B cell (primary cell): ENCODE measurements at regions of chr6 and their contacts with region 1.

Region 1: GRCh38 chr6:109009236-109009961 is 85.2 kb downstream of the SESN1 start:
- DNase-seq: peak; percentile 94
- ATAC-seq: peak; percentile 98
- H3K4me3 ChIP-seq: peak overlapping the region; percentile 77 to 97 (median 89)
- H3K4me3 Mint-ChIP-seq: peak overlapping the region; percentile 98
- H3K27ac ChIP-seq: peak overlapping the region; percentile 87 to 90
- H3K27ac Mint-ChIP-seq: peak overlapping the region; percentile 97
- H3K4me1 ChIP-seq: peaks cover 32 to 52% of the 10 kb centered on the region in 2 donors
- H3K4me1 Mint-ChIP-seq: peaks cover 64% of the 10 kb centered on the region
- H3K27me3 ChIP-seq: no peaks in the 10 kb centered on the region
- H3K27me3 Mint-ChIP-seq: no peaks in the 10 kb centered on the region
- CTCF ChIP-seq: no peak

Region 2: GRCh38 chr6:108983151-108983550 is 26.2 kb before region 1 on chr6:
- CTCF ChIA-PET with region 1: no interaction called
- POLR2A ChIA-PET with region 1: no interaction called
- intact Hi-C with region 1: no loop called
- DNase-seq: no peak
- ATAC-seq: no peak
- H3K4me3 ChIP-seq: no peak overlapping the region
- H3K4me3 Mint-ChIP-seq: no peak overlapping the region
- H3K27ac ChIP-seq: no peak overlapping the region
- H3K27ac Mint-ChIP-seq: no peak overlapping the region
- H3K4me1 ChIP-seq: no peaks in the 10 kb centered on the region
- H3K4me1 Mint-ChIP-seq: no peaks in the 10 kb centered on the region
- H3K27me3 ChIP-seq: no peaks in the 10 kb centered on the region
- H3K27me3 Mint-ChIP-seq: no peaks in the 10 kb centered on the region
- CTCF ChIP-seq: no peak

Region 3: DNA sequence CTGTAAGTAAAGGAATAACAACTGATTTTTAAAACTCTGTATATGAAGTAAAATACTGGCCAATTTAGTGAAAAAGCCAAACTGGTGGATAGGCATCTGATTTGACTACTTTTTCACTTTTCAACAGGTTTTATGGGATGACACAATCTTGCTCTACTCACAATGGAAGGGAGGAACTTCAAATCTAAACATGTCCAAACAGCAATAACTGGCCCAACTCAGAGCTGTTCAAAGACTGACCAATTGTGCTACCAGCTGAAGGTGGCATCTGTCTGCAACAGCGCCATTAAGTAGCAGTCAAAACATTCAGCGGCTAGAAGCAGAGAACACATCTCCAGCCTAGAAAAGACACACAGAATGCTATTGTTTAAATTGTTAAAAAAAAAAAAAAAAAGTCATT is 40.6 kb after region 1 on chr6:
- CTCF ChIA-PET with region 1: no interaction called
- POLR2A ChIA-PET with region 1: interaction called, 3 read pairs
- intact Hi-C with region 1: loop called (anchors 5 kb)
- DNase-seq: no peak
- ATAC-seq: no peak
- H3K4me3 ChIP-seq: no peak overlapping the region
- H3K4me3 Mint-ChIP-seq: no peak overlapping the region
- H3K27ac ChIP-seq: no peak overlapping the region
- H3K27ac Mint-ChIP-seq: no peak overlapping the region
- H3K4me1 ChIP-seq: peaks cover 24 to 32% of the 10 kb centered on the region in 2 donors
- H3K4me1 Mint-ChIP-seq: peaks cover 31% of the 10 kb centered on the region
- H3K27me3 ChIP-seq: no peaks in the 10 kb centered on the region
- H3K27me3 Mint-ChIP-seq: no peaks in the 10 kb centered on the region
- CTCF ChIP-seq: no peak

Region 4: DNA sequence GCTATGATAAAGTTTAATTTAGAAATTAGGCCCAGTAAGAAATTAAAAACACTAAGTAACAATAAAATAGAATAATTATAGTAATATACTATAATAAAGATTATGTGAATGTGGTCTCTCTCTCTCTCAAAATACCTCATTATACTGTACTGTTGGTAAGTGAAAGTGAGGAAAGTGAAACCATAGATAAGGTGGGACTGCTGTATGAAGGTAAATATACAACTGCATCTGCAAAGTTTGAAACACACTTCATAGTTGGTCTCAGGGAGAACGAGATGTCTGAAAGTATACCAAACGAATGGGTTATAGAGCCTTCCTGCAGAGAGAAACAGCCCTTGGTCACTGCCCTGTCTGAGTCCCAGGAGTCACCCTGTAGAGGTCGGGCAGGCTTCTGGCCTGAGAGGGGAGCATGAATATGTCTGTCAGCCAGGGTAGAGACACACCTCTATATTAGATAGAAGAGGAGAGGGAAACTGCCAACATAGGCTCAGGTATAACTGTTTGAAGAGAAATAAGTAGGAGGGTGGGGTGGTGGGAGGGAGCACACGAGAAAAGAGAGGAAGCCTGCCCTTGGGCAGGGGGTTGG is 53.5 kb after region 1 on chr6:
- CTCF ChIA-PET with region 1: no interaction called
- POLR2A ChIA-PET with region 1: no interaction called
- intact Hi-C with region 1: no loop called
- DNase-seq: no peak
- ATAC-seq: no peak
- H3K4me3 ChIP-seq: no peak overlapping the region
- H3K4me3 Mint-ChIP-seq: no peak overlapping the region
- H3K27ac ChIP-seq: no peak overlapping the region
- H3K27ac Mint-ChIP-seq: no peak overlapping the region
- H3K4me1 ChIP-seq: peaks cover 7 to 8% of the 10 kb centered on the region in 2 donors
- H3K4me1 Mint-ChIP-seq: peaks cover 19% of the 10 kb centered on the region
- H3K27me3 ChIP-seq: no peaks in the 10 kb centered on the region
- H3K27me3 Mint-ChIP-seq: no peaks in the 10 kb centered on the region
- CTCF ChIP-seq: no peak